Heart left ventricle (tissue), 16 donors: ENCODE measurements at regions of chr19 and their contacts with region 1.

Region 1: DNA sequence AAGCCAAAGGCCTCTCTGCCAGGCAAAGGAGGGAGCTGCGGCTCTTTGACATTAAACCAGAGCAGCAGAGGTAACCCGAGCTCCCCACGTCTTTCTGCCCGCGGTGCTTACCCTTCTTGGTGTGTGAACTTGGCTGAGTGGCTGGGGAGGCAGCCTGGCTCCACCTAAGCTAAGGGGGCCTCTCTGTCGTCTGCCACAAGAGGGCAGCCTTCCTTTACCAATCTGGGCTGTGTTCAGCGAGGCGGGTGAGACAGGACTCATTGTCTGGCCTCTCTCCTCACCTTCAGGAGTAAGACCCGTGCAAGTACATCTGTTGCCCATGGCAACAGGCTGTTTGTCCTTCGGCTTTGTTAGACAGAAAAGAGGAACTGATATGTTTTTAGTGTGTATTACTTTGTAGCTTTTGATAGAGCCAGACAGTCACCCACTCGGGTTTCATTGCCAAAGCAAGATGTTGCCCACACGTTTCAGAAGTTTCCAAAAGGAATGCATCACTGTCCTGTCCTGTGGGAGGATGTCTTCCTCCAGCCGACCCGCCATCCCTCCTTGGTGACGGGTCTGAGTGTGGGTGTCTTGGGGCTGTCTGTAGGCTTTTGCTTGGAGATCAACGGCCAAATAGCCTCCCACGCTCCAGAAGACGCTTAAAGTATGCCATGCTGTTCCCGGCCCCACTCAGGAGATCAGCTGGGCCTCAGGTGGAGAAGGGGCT is 4.6 kb downstream of the POP4 start:
- DNase-seq: peak; percentile 77 to 85 (median 80)
- ATAC-seq: peak; percentile 65 to 84 (median 78)
- H3K4me3 ChIP-seq: no peak overlapping the region
- H3K27ac ChIP-seq: no peak overlapping the region
- H3K4me1 ChIP-seq: peaks cover 0 to 15% (median 8%) of the 10 kb centered on the region in 12 donors
- H3K27me3 ChIP-seq: no peaks in the 10 kb centered on the region
- CTCF ChIP-seq: peak; percentile 79 to 91 (median 83)
- POLR2A ChIP-seq: no peak

Region 2: GRCh38 chr19:29294343-29294811 is 316.3 kb before region 1 on chr19:
- intact Hi-C with region 1: no loop called
- DNase-seq: no peak
- ATAC-seq: no peak
- H3K4me3 ChIP-seq: no peak overlapping the region
- H3K27ac ChIP-seq: no peak overlapping the region
- H3K4me1 ChIP-seq: no peaks in the 10 kb centered on the region
- H3K27me3 ChIP-seq: peaks cover 0 to 18% (median 0%) of the 10 kb centered on the region in 9 donors
- CTCF ChIP-seq: no peak
- POLR2A ChIP-seq: no peak

Region 3: GRCh38 chr19:29665215-29665825 is 54.6 kb after region 1 on chr19 and contains the start of gene PLEKHF1:
- intact Hi-C with region 1: loop called in 6 of 10 experiments (anchors 2 to 10 kb)
- DNase-seq: peak; percentile 93 to 96 (median 94)
- ATAC-seq: peak; percentile 48 to 87 (median 84)
- H3K4me3 ChIP-seq: peak within 1 kb of the TSS; percentile 55 to 98 (median 92)
- H3K27ac ChIP-seq: peak within 1 kb of the TSS; percentile 80 to 98 (median 93)
- H3K4me1 ChIP-seq: peaks cover 14 to 71% (median 55%) of the 10 kb centered on the region in 12 donors
- H3K27me3 ChIP-seq: no peaks in the 10 kb centered on the region
- CTCF ChIP-seq: peak in 2 of 12 donors; percentile 17 to 23
- POLR2A ChIP-seq: peak; percentile 74 to 92
- total RNA-seq, gene PLEKHF1: 7.8 to 46.1 (median 17.5) TPM

Region 4: DNA sequence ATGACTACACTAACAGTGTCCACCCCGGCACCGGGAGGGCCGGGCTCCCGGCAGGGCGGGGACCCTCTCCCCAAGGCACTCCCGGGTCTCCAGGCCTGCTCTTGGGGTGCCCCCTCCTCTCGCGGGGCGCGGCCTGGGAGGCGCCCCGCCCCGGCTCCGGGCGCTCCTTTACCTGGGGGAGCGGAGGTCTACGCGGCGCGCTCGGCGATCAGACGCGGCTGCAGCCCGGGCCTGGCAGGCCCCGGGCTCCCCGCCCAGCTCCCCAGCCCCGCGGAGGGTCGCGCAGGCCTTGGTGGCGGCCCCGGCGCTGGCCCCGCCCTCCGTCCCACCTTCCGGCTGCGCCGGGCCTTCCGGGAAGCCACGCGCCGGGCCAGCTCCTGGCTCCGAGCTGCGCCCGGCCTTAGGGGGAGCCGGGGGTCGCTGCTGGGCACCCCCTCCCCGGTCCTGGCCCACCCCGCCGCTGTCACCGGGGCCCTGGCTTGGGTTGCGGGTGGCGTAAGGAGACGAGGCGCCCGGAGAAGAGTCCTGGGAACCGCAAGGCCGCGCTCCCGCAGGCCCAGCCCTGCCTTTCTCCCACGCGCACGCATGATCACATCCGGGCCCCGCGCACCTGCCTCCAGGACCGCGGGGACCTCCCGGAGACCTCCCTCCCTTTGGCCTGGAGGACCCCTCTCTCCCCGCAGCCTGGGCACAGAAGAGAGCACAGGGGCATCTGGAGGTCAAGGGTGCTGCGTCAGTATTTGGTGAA is 104.4 kb after region 1 on chr19 and contains the start of gene C19orf12:
- intact Hi-C with region 1: loop called (anchors 1 to 5 kb)
- DNase-seq: peak; percentile 54 to 82 (median 72)
- ATAC-seq: peak; percentile 38 to 89 (median 76)
- H3K4me3 ChIP-seq: peak within 1 kb of the TSS; percentile 68 to 100 (median 91)
- H3K27ac ChIP-seq: peak within 1 kb of the TSS; percentile 89 to 100 (median 96)
- H3K4me1 ChIP-seq: peaks cover 0 to 48% (median 24%) of the 10 kb centered on the region in 12 donors
- H3K27me3 ChIP-seq: peaks cover 0 to 2% (median 0%) of the 10 kb centered on the region in 9 donors
- CTCF ChIP-seq: no peak
- POLR2A ChIP-seq: peak; percentile 47 to 84
- total RNA-seq, gene C19orf12: 35.7 to 80.3 (median 49.2) TPM

Region 5: GRCh38 chr19:29798774-29799497 is 188.2 kb after region 1 on chr19:
- intact Hi-C with region 1: no loop called
- DNase-seq: no peak
- ATAC-seq: no peak
- H3K4me3 ChIP-seq: no peak overlapping the region
- H3K27ac ChIP-seq: no peak overlapping the region
- H3K4me1 ChIP-seq: no peaks in the 10 kb centered on the region
- H3K27me3 ChIP-seq: no peaks in the 10 kb centered on the region
- CTCF ChIP-seq: no peak
- POLR2A ChIP-seq: no peak

Region 6: DNA sequence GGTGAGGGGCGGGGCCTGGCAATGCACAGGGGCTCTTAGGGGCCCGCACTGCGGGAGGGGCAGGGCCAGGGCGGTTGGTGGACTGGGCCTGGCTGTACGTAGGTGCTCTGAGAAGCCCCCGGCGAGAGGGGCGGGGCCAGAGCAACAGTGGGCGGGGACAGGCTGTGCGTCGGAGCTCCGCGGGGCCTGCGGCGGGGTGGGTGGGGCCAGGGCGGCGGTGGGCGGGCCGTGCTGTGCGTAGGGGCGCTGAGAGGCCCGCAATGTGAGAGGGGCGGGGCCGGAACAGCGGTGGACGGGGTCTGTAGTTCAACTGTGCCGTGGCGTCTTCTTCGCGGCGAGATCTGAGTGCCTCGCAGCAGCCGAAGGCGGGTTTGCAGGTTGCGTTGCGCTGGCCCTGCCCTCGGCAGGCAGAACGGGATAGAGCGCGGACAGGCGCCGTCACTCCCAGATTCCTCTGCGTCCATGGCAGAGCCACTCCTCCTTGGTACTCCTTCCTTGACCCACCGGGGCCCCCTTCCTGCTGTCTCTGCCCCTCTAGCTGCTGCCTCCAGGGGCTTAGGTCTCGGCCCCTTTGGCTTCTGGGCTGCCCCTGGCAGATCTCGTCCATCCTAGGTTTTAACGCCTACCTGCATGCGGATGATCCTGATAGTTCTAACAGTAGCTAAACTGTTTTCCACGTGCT is 234.3 kb after region 1 on chr19:
- intact Hi-C with region 1: loop called in 1 of 10 experiments (anchors 10 kb)
- DNase-seq: peak; percentile 90 to 96 (median 94)
- ATAC-seq: peak; percentile 91 to 95 (median 94)
- H3K4me3 ChIP-seq: peak overlapping the region; percentile 57 to 87 (median 72)
- H3K27ac ChIP-seq: peak overlapping the region in 11 of 12 donors; percentile 58 to 87 (median 76)
- H3K4me1 ChIP-seq: peaks cover 7 to 26% (median 20%) of the 10 kb centered on the region in 12 donors
- H3K27me3 ChIP-seq: no peaks in the 10 kb centered on the region
- CTCF ChIP-seq: peak in 2 of 12 donors; percentile 6 to 7
- POLR2A ChIP-seq: peak in 1 of 2 donors; percentile 37

Region 7: DNA sequence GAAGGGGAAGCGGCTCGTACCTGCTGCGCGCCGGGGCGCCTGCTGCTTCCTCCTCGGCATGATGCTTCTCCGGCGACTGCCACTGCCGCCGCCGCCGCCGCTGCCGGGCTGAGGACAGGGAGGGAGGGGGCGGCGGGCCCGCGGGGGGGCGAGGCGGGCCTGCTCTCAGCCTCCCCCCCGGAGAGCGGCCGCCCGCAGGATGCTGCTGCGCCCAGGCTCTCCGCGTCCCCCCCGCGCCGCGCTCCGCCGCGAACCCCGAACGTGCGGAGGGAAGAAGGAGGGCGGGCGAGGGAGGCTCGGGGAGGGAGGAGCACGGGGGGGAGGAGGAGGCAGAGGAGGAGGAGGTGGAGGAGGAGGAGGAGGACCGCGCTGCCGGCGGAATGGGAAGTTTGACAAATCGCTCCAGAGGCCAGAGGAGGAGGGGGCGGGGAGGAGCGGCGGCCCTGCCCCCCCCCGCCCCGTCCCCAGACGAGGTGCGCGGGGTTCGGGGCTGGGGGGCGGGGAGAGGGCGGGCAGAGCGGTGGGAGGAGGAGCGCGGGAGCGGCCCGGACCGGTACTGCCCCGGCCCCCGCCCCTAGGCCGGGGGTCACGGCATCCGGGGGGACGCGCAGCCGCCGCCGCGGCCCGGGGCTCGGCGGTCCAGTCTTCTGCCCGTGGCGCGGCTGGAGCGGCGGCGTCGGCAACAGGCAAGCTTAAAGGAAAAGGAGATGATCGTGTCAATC is 1738.6 kb after region 1 on chr19 and contains the start of gene TSHZ3:
- intact Hi-C with region 1: loop called in 1 of 10 experiments (anchors 10 kb)
- DNase-seq: peak; percentile 81 to 90 (median 86)
- ATAC-seq: peak; percentile 69 to 86 (median 80)
- H3K4me3 ChIP-seq: peak within 1 kb of the TSS; percentile 75 to 96 (median 86)
- H3K27ac ChIP-seq: peak within 1 kb of the TSS; percentile 79 to 97 (median 93)
- H3K4me1 ChIP-seq: peaks cover 0 to 47% (median 15%) of the 10 kb centered on the region in 12 donors
- H3K27me3 ChIP-seq: peaks cover 0 to 36% (median 17%) of the 10 kb centered on the region in 9 donors
- CTCF ChIP-seq: no peak
- POLR2A ChIP-seq: no peak
- total RNA-seq, gene TSHZ3: 2.0 to 11.5 (median 2.7) TPM